Activated naive CD4-positive, alpha-beta T cell treated with anti-CD3 and anti-CD28 coated beads for 36 hours (primary cell): ENCODE measurements at regions of chr4 and their contacts with region 1.

Region 1: GRCh38 chr4:6688879-6689505 is 4.7 kb upstream of the S100P start:
- DNase-seq: peak; percentile 89
- H3K4me3 Mint-ChIP-seq: peak overlapping the region; percentile 51
- H3K27ac Mint-ChIP-seq: no peak overlapping the region
- H3K4me1 Mint-ChIP-seq: peaks cover 61% of the 10 kb centered on the region
- H3K27me3 Mint-ChIP-seq: no peaks in the 10 kb centered on the region

Region 2: DNA sequence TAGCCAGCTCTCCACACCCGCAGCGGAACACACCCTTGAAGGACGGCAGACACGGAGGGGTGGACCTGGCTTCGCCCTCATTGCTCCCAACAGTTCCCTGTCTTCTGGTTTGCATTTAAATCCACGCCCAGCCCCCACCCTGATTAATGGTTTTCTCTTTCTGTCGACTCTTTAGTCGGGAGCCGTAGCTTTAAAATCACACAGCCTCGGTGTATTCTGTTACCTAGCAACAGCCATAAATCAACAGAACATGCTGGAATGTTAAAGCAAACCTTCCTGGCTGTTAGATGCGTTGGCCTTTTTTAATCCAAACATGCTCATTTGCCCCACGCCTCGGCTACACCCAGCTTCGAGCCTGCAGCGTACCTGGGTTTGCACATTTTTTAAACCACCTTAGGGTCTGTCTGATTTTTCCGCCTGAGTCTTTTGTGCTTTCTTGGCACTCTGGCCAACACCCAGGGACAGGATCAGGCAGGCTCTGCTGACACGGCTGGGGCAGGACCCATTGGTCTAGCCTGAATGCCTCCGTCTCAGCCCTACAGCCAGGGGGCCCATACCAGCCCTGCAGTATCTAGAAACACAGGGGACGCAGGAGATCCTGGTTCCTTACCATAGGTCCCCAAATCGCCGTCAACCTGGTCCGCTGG is 195.2 kb before region 1 on chr4:
- CTCF ChIA-PET with region 1: no interaction called
- intact Hi-C with region 1: no loop called
- DNase-seq: no peak
- H3K4me3 Mint-ChIP-seq: no peak overlapping the region
- H3K27ac Mint-ChIP-seq: no peak overlapping the region
- H3K4me1 Mint-ChIP-seq: no peaks in the 10 kb centered on the region
- H3K27me3 Mint-ChIP-seq: peaks cover 25% of the 10 kb centered on the region

Region 3: GRCh38 chr4:6562931-6563901 is 125.8 kb before region 1 on chr4:
- CTCF ChIA-PET with region 1: no interaction called
- intact Hi-C with region 1: no loop called
- DNase-seq: peak; percentile 15
- H3K4me3 Mint-ChIP-seq: no peak overlapping the region
- H3K27ac Mint-ChIP-seq: no peak overlapping the region
- H3K4me1 Mint-ChIP-seq: peaks cover 13% of the 10 kb centered on the region
- H3K27me3 Mint-ChIP-seq: peaks cover 42% of the 10 kb centered on the region

Region 4: DNA sequence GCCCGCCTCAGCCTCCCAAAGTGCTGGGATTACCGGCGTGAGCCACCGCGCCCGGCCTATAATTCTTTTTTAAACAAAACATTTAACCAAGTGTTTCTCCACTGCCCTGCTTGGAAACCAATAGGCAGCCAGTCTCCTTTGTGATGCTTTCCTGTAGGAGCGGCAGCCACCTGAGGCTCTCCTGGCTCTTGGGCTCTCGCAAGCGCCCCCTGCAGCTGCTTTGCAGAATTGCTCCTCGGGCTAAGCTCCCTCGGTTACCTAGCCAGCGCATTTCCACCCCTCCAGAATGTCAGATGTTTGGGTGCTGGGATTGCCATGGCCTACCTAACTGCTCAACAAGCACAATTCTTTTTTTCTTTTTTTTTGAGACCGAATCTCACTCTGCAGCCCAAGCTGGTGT is 12.4 kb after region 1 on chr4:
- CTCF ChIA-PET with region 1: interaction called, 18 read pairs
- intact Hi-C with region 1: no loop called
- DNase-seq: peak; percentile 60
- H3K4me3 Mint-ChIP-seq: no peak overlapping the region
- H3K27ac Mint-ChIP-seq: no peak overlapping the region
- H3K4me1 Mint-ChIP-seq: peaks cover 73% of the 10 kb centered on the region
- H3K27me3 Mint-ChIP-seq: no peaks in the 10 kb centered on the region

Region 5: GRCh38 chr4:6788123-6788522 is 99.1 kb after region 1 on chr4:
- CTCF ChIA-PET with region 1: no interaction called
- intact Hi-C with region 1: no loop called
- DNase-seq: no peak
- H3K4me3 Mint-ChIP-seq: no peak overlapping the region
- H3K27ac Mint-ChIP-seq: peak overlapping the region; percentile 13
- H3K4me1 Mint-ChIP-seq: peaks cover 64% of the 10 kb centered on the region
- H3K27me3 Mint-ChIP-seq: no peaks in the 10 kb centered on the region